Heart right ventricle (tissue), 16 donors: ENCODE measurements at regions of chr15 and their contacts with region 1.

Region 1: GRCh38 chr15:39495871-39496840 is 84.7 kb upstream of the THBS1 start:
- DNase-seq: no peak
- ATAC-seq: no peak
- H3K4me3 ChIP-seq: no peak overlapping the region
- H3K27ac ChIP-seq: peak overlapping the region in 5 of 10 donors; percentile 11 to 36 (median 28)
- H3K4me1 ChIP-seq: peaks cover 0 to 49% (median 25%) of the 10 kb centered on the region in 9 donors
- H3K27me3 ChIP-seq: no peaks in the 10 kb centered on the region
- CTCF ChIP-seq: no peak

Region 2: GRCh38 chr15:39213385-39213840 is 282.7 kb before region 1 on chr15:
- intact Hi-C with region 1: loop called in 1 of 10 experiments (anchors 10 kb)
- DNase-seq: peak; percentile 43 to 57
- ATAC-seq: peak; percentile 82 to 99 (median 92)
- H3K4me3 ChIP-seq: no peak overlapping the region
- H3K27ac ChIP-seq: peak overlapping the region in 9 of 10 donors; percentile 26 to 68 (median 50)
- H3K4me1 ChIP-seq: peaks cover 0 to 11% (median 3%) of the 10 kb centered on the region in 9 donors
- H3K27me3 ChIP-seq: no peaks in the 10 kb centered on the region
- CTCF ChIP-seq: no peak